ENCODE measurements at regions of chr17 and their contacts with region 1.

Region 1: DNA sequence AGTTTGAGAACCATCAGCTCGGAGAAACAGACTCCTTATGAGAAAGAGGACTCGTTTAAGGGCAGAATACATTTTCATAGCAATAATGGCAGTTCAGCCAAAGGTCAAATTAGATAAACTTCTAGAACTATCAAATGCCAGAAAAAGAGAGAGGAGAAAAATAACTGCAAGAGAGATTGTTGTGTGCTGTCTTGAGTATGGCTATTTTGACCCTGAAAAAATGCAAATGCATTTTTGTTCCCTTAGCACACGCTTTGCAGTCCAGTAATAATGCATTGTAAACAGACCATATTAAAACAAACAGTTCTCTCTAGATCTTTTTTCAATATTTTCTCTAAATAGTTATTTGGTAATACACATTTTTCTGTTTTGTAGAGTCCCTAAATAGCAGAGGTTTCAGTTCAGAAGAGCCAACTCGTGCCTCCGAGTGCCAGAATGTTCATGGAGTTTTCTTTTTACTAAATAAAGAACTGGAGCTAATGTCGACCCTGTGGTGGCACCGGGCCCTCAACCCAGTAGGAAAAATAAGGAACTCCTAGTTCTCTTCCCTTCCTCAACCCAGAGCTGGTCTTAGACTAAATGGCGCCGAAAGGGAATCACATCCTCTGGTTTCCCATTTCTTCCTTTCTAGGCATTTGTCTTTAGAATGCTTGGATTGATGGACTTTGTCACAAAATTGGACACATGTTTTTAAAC is 298.0 kb downstream of the MAP2K4 start:
- DNase-seq: peak in 1 of 2 donors; percentile 86
- H3K4me3 ChIP-seq: peak overlapping the region in 1 of 2 donors; percentile 18
- H3K27ac ChIP-seq: peak overlapping the region; percentile 89 to 90
- H3K4me1 ChIP-seq: peaks cover 0 to 22% of the 10 kb centered on the region in 2 donors
- H3K27me3 ChIP-seq: no peaks in the 10 kb centered on the region
- CTCF ChIP-seq: no peak

Region 2: GRCh38 chr17:11682646-11683045 is 636.1 kb before region 1 on chr17:
- intact Hi-C with region 1: no loop called
- DNase-seq: no peak
- H3K4me3 ChIP-seq: no peak overlapping the region
- H3K27ac ChIP-seq: no peak overlapping the region
- H3K4me1 ChIP-seq: no peaks in the 10 kb centered on the region
- H3K27me3 ChIP-seq: no peaks in the 10 kb centered on the region
- CTCF ChIP-seq: no peak

Region 3: DNA sequence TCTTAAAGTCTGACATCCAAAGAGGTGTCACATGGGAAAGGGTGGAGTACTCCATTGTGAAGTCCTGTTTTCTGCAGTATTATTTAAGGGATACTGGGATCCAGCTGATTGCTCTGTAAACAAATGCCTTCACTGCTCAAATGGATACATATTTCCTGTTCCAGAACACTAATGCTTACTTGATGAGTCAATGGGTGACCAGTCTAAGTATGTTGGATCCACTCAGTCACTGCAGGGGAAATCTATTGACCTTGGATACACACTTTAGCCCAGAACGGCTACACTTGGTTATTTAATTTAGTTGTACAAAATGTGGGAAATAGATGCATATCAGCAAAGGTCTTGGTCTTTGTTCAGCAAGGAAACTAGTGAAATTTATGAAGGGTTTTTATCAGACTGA is 36.7 kb before region 1 on chr17:
- intact Hi-C with region 1: loop called (anchors 5 kb)
- DNase-seq: no peak
- H3K4me3 ChIP-seq: no peak overlapping the region
- H3K27ac ChIP-seq: peak overlapping the region; percentile 76 to 77
- H3K4me1 ChIP-seq: peaks cover 0 to 15% of the 10 kb centered on the region in 2 donors
- H3K27me3 ChIP-seq: no peaks in the 10 kb centered on the region
- CTCF ChIP-seq: no peak